Tibial artery (tissue), 4 donors: ENCODE measurements at regions of chr13 and their contacts with region 1.

Region 1: DNA sequence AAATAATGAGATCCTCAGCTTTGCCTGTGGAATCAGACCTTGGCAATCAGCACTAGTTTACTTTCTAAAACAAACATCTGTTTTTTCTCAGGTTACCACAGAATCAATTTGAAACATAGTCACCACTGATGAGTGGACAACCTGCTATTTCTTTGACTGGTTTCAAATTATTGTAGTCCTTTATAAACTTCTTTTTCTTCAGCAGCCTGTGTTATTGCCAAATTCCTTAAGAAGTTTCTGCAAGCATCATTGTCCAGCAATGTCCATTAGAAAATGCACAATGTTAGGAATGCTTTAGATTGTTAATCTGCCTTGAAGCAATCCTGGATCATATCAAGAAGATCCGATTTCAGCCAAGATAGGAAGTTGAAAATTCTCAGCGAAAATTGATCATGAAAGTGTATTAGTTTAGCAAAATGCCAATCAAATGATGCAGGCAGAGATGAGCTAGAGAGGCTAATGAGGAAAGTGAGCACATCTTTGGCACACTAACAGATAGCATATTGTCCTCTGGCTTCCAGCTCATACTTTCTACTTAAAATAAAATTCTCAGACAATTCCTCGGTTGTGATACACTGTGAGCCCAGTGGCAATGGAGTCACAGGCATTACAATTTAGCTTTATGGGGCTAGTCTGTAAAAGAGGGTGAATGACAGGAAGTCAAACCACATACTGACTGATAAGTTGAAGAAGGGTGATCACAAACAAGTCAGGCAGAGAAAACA is 270.6 kb downstream of the SLITRK6 start:
- DNase-seq: no peak
- H3K4me3 ChIP-seq: no peak overlapping the region
- H3K27ac ChIP-seq: no peak overlapping the region
- H3K4me1 ChIP-seq: no peaks in the 10 kb centered on the region
- H3K27me3 ChIP-seq: no peaks in the 10 kb centered on the region
- CTCF ChIP-seq: no peak

Region 2: DNA sequence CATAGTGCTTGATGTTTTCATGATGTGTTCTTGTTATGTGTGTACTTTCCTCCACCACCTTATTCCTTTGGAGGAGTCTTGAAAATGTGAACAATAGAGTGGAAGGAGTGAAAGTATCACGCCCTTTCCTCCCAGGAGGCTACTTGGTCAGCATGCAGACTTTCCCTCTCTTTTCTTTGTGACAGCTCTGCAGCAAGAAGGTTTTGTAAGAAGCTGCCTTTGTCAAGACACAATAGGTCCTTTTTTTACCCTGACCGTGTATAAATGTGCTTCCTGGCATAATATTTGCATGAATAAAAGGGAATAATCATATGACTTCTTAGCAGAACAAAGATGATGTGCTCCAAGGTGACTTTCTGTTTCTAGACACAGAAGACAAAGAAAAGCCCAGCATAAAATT is 1260.0 kb after region 1 on chr13:
- intact Hi-C with region 1: loop called (anchors 5 kb)
- DNase-seq: no peak
- H3K4me3 ChIP-seq: no peak overlapping the region
- H3K27ac ChIP-seq: no peak overlapping the region
- H3K4me1 ChIP-seq: no peaks in the 10 kb centered on the region
- H3K27me3 ChIP-seq: no peaks in the 10 kb centered on the region
- CTCF ChIP-seq: no peak